ENCODE measurements at regions of chr11 and their contacts with region 1.

Region 1: DNA sequence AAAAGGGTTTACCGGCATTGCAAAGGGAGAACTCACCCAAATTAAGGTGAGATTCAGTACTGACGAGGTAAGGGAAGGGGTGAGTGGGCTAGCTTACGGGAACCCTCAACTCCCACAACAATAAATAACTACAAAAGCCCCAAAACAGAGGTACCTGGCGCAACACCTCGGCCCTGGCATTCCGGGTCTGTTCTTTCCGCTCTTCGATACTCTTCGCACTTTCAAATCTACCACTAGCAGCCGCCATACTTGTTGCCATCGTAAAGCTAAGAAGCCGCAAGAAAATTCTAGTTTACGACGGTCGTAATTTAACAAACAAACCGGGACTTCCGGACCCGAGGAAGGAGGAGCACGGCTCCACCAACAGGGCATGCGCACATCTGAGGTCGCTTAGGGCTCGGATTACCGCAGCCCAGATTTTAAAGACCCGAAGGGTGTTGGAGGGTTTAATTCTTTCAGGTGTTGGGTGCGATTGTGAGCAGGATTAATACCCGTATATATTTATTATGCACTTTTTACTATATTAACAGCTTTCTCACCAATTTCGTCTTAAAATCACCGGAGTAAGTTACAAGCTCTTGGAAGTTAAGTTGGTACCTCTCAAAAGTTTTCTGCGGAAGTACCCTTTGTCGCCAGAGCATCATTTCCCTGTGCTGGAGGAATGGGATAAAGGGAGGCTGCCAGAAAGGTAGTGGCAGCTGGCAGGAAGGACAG is at the start of gene CWF19L2:
- DNase-seq: peak; percentile 33 to 93
- H3K4me3 ChIP-seq: peak within 1 kb of the TSS; percentile 73 to 81
- H3K27ac ChIP-seq: peak within 1 kb of the TSS; percentile 74 to 75
- H3K4me1 ChIP-seq: no peaks in the 10 kb centered on the region
- H3K27me3 ChIP-seq: no peaks in the 10 kb centered on the region
- CTCF ChIP-seq: no peak
- total RNA-seq, gene CWF19L2: 10.2 TPM

Region 2: DNA sequence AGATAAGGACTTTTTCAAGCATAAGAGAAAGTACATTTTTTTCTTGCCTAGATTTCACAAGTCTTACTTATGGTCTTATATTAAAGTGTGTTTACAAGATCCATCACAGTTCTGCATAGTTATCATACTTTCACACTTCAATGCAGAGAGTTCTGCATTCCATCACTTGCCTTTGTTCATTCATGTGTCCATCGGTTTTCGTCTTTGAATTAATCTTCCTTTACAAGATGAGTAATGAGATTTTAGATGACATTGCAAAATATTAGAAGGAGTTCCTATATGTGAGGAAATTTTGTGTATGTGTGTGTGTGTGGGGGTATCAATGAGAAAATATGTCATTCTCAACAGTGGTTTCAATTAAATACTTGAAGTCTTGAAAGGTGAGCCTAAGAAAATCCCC is 341.4 kb before region 1 on chr11:
- intact Hi-C with region 1: no loop called
- DNase-seq: no peak
- H3K4me3 ChIP-seq: no peak overlapping the region
- H3K27ac ChIP-seq: no peak overlapping the region
- H3K4me1 ChIP-seq: no peaks in the 10 kb centered on the region
- H3K27me3 ChIP-seq: no peaks in the 10 kb centered on the region
- CTCF ChIP-seq: no peak

Region 3: GRCh38 chr11:107337917-107338316 is 119.8 kb before region 1 on chr11:
- intact Hi-C with region 1: no loop called
- DNase-seq: no peak
- H3K4me3 ChIP-seq: no peak overlapping the region
- H3K27ac ChIP-seq: no peak overlapping the region
- H3K4me1 ChIP-seq: no peaks in the 10 kb centered on the region
- H3K27me3 ChIP-seq: no peaks in the 10 kb centered on the region
- CTCF ChIP-seq: no peak

Region 4: GRCh38 chr11:107496011-107496410 is 38.3 kb after region 1 on chr11:
- intact Hi-C with region 1: no loop called
- DNase-seq: no peak
- H3K4me3 ChIP-seq: no peak overlapping the region
- H3K27ac ChIP-seq: no peak overlapping the region
- H3K4me1 ChIP-seq: no peaks in the 10 kb centered on the region
- H3K27me3 ChIP-seq: no peaks in the 10 kb centered on the region
- CTCF ChIP-seq: no peak

Region 5: DNA sequence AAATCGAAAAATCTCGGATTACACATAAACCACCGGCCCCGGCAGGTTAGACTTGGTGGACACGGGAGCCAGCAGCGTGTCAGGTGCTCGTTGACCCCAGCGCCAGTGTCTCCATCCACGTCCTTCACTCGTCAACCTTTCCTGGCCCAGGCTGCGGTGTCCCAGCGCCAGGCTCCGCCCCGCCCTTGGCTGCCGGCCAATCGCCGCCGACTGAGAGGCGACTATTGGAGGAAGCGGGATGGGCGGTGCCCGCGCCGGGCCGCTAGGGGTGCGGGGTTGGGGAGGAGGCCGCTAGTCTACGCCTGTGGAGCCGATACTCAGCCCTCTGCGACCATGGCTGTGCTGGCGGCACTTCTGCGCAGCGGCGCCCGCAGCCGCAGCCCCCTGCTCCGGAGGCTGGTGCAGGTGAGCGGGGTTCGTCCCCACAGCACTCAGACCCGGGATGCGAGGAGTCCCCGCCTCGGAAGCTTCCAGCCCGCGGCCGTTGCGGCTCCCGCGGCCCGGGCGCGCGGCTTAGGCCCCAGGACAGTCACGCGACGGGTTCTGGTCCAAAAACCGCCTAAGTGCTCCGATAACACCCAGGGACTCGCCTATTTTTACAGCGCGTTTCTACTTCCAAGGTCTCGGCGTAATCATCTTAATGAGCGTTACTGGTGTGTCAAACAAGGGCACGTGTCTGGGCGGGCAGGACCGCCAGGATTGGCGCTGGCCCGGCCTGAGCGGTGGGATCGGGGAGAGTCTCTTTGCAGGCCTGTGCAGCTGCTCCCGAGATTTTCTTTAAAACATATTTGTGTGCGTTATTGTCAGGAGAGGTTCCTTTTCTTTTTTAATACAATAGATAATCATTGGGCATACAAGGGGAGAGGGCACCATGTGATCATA is 663.8 kb after region 1 on chr11 and contains the start of gene ACAT1:
- intact Hi-C with region 1: loop called (anchors 10 kb)
- DNase-seq: peak; percentile 96 to 99
- H3K4me3 ChIP-seq: peak within 1 kb of the TSS; percentile 84 to 92
- H3K27ac ChIP-seq: peak within 1 kb of the TSS; percentile 96 to 97
- H3K4me1 ChIP-seq: peaks cover 0 to 20% of the 10 kb centered on the region in 2 donors
- H3K27me3 ChIP-seq: no peaks in the 10 kb centered on the region
- CTCF ChIP-seq: peak in 2 of 3 experiments; percentile 9 to 39
- total RNA-seq, gene ACAT1: 187 TPM

Measured in ascending aorta (tissue), 2 donors.